CD4-positive, alpha-beta memory T cell (primary cell): ENCODE measurements at regions of chr22 and their contacts with region 1.

Region 1: GRCh38 chr22:25777870-25778269 is 35.9 kb downstream of the MYO18B start:
- DNase-seq: no peak
- H3K4me3 ChIP-seq: no peak overlapping the region
- H3K4me3 Mint-ChIP-seq: no peak overlapping the region
- H3K27ac ChIP-seq: no peak overlapping the region
- H3K27ac Mint-ChIP-seq: no peak overlapping the region
- H3K4me1 ChIP-seq: peaks cover 2% of the 10 kb centered on the region
- H3K4me1 Mint-ChIP-seq: peaks cover 2 to 3% (median 2%) of the 10 kb centered on the region in 4 donors
- H3K27me3 ChIP-seq: no peaks in the 10 kb centered on the region
- H3K27me3 Mint-ChIP-seq: peaks cover 0 to 5% of the 10 kb centered on the region in 2 donors

Region 2: GRCh38 chr22:25235547-25236290 is 542.2 kb before region 1 on chr22:
- CTCF ChIA-PET with region 1: no interaction called
- POLR2A ChIA-PET with region 1: no interaction called
- intact Hi-C with region 1: loop called (anchors 10 kb)
- DNase-seq: peak in 4 of 5 donors; percentile 36 to 49 (median 46)
- H3K4me3 ChIP-seq: no peak overlapping the region
- H3K4me3 Mint-ChIP-seq: peak overlapping the region in 3 of 8 donors; percentile 21 to 65 (median 26)
- H3K27ac ChIP-seq: no peak overlapping the region
- H3K27ac Mint-ChIP-seq: no peak overlapping the region
- H3K4me1 ChIP-seq: no peaks in the 10 kb centered on the region
- H3K4me1 Mint-ChIP-seq: peaks cover 0 to 6% (median under 1%) of the 10 kb centered on the region in 4 donors
- H3K27me3 ChIP-seq: peaks cover 5% of the 10 kb centered on the region
- H3K27me3 Mint-ChIP-seq: peaks cover 32 to 39% of the 10 kb centered on the region in 2 donors

Region 3: DNA sequence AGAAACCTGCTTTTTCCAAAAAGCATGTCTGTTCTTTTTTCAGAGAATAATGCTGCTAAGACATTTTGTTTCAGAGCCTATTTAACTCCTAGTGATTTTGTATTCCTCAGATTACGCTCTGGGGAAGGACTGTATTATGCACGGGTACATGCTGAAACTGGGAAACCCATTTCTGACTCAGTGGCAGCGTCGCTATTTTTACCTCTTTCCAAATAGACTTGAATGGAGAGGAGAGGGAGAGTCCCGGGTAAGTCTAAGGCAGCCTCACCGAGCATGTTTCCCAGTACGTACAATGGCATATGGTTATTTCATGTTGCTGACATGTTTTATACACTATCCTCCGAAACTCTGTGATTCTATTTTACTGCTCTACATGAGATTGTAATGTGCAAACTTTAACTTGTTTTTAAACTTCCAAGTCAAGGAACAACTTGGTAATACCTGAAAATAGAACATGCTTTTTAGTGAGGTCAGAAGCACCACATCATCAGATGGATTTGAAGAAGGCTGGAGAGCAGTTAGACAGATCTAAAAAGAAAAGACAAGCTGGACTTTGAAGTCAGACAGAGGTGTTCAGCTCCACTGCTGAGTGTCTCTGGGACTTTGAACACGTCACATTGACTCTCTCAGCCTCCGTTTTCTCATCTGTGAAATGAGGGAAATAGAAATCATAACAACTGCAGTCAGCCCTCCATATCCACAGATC is 59.6 kb before region 1 on chr22:
- CTCF ChIA-PET with region 1: no interaction called
- POLR2A ChIA-PET with region 1: no interaction called
- intact Hi-C with region 1: no loop called
- DNase-seq: no peak
- H3K4me3 ChIP-seq: no peak overlapping the region
- H3K4me3 Mint-ChIP-seq: no peak overlapping the region
- H3K27ac ChIP-seq: no peak overlapping the region
- H3K27ac Mint-ChIP-seq: no peak overlapping the region
- H3K4me1 ChIP-seq: no peaks in the 10 kb centered on the region
- H3K4me1 Mint-ChIP-seq: no peaks in the 10 kb centered on the region
- H3K27me3 ChIP-seq: no peaks in the 10 kb centered on the region
- H3K27me3 Mint-ChIP-seq: no peaks in the 10 kb centered on the region